Sigmoid colon (tissue), 7 donors: ENCODE measurements at regions of chrX and their contacts with region 1.

Region 1: GRCh38 chrX:133670383-133670782 is 255.1 kb upstream of the GPC4 start:
- DNase-seq: no peak
- H3K4me3 ChIP-seq: no peak overlapping the region
- H3K27ac ChIP-seq: no peak overlapping the region
- H3K4me1 ChIP-seq: peaks cover 0 to 9% (median 0%) of the 10 kb centered on the region in 4 donors
- H3K27me3 ChIP-seq: no peaks in the 10 kb centered on the region
- CTCF ChIP-seq: peak; percentile 54 to 71 (median 54)
- EP300 ChIP-seq: no peak
- POLR2A ChIP-seq: no peak

Region 2: GRCh38 chrX:132968296-132968949 is 702.0 kb before region 1 on chrX:
- intact Hi-C with region 1: loop called (anchors 10 kb)
- DNase-seq: no peak
- H3K4me3 ChIP-seq: no peak overlapping the region
- H3K27ac ChIP-seq: no peak overlapping the region
- H3K4me1 ChIP-seq: no peaks in the 10 kb centered on the region
- H3K27me3 ChIP-seq: no peaks in the 10 kb centered on the region
- CTCF ChIP-seq: no peak
- EP300 ChIP-seq: no peak
- POLR2A ChIP-seq: no peak

Region 3: GRCh38 chrX:133171962-133172708 is 498.2 kb before region 1 on chrX:
- intact Hi-C with region 1: loop called (anchors 10 kb)
- DNase-seq: no peak
- H3K4me3 ChIP-seq: no peak overlapping the region
- H3K27ac ChIP-seq: no peak overlapping the region
- H3K4me1 ChIP-seq: no peaks in the 10 kb centered on the region
- H3K27me3 ChIP-seq: no peaks in the 10 kb centered on the region
- CTCF ChIP-seq: peak in 3 of 4 experiments; percentile 10 to 34 (median 12)
- EP300 ChIP-seq: no peak
- POLR2A ChIP-seq: no peak

Region 4: GRCh38 chrX:133333154-133333750 is 337.1 kb before region 1 on chrX:
- intact Hi-C with region 1: loop called (anchors 5 kb)
- DNase-seq: no peak
- H3K4me3 ChIP-seq: no peak overlapping the region
- H3K27ac ChIP-seq: peak overlapping the region in 3 of 4 donors; percentile 17 to 50 (median 42)
- H3K4me1 ChIP-seq: peaks cover 0 to 49% (median 11%) of the 10 kb centered on the region in 4 donors
- H3K27me3 ChIP-seq: no peaks in the 10 kb centered on the region
- CTCF ChIP-seq: no peak
- EP300 ChIP-seq: no peak
- POLR2A ChIP-seq: no peak